Thyroid gland (tissue), 4 donors: ENCODE measurements at regions of chr1 and their contacts with region 1.

Region 1: DNA sequence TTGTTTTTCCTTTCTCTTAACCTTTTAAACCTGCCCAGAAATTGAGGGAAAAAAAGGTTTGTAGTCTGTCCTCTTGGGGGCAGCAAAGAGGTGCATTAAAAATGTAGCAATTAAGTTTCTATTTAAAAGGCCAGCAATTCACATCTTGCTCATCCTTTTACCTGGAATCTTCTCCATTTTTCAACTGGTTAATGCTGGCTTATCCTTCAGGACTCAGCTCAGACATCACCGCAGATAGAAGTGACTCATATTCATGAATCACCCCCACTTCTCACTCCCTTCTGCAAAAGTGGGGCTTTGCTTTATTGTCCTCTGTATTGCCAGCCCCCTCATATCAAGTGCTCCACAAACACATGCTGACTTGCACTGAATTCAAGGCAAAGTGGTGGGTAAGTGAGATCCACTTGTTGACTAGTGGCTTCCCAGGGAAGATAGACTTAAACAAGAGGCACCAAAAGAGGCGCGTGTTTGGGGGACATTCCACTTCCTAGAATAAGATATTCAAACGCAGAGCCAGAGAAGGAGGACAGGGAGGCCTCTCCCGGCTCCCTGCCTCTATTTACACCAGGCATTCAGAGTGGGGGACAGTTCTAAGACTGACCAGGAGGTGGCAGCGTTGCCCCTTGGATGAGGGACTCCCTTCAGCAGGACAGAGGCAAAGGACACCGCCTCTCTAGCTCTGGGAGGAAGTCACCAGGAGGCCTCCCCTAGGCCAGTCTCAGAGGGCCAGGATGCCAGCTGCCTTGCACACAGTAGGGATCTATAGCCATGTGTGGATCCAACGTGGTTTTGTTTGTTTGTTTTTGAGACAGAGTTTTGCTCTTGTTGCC is 23.2 kb upstream of the ZNF648 start:
- DNase-seq: peak; percentile 89
- H3K4me3 ChIP-seq: no peak overlapping the region
- H3K27ac ChIP-seq: peak overlapping the region; percentile 18 to 76 (median 68)
- H3K4me1 ChIP-seq: peaks cover 10 to 17% of the 10 kb centered on the region in 2 donors
- H3K27me3 ChIP-seq: no peaks in the 10 kb centered on the region
- CTCF ChIP-seq: peak; percentile 74 to 97 (median 92)
- POLR2A ChIP-seq: no peak

Region 2: GRCh38 chr1:181969902-181970301 is 114.8 kb before region 1 on chr1:
- intact Hi-C with region 1: no loop called
- DNase-seq: no peak
- H3K4me3 ChIP-seq: no peak overlapping the region
- H3K27ac ChIP-seq: no peak overlapping the region
- H3K4me1 ChIP-seq: no peaks in the 10 kb centered on the region
- H3K27me3 ChIP-seq: no peaks in the 10 kb centered on the region
- CTCF ChIP-seq: no peak
- POLR2A ChIP-seq: no peak

Region 3: DNA sequence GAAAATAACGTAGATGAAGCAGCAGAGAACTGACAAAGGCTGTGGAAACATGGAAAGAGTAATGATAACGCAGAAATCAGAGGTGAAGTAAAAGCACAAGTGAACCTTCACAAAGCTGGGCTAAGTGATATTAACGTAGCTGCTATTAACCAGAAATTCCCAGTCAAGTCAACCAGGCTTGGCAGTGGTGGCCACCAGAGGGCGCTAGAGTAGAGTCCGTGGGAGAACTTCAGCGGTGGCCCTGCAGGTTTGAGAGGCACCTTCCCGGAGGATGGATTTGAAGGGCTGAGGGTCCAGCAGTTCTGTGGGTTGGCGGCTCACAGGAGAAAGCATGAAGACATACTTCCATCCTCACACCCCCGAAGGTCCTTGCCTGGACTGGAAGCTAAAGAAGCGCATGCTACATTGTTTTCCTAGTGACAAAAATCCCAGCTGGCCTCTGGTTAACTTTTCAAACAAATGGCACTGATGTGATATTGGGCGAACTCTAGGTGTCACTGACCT is 58.5 kb after region 1 on chr1:
- intact Hi-C with region 1: loop called (anchors 5 kb)
- DNase-seq: peak; percentile 93 to 98
- H3K4me3 ChIP-seq: no peak overlapping the region
- H3K27ac ChIP-seq: peak overlapping the region; percentile 94 to 100 (median 95)
- H3K4me1 ChIP-seq: peaks cover 26 to 54% of the 10 kb centered on the region in 2 donors
- H3K27me3 ChIP-seq: no peaks in the 10 kb centered on the region
- CTCF ChIP-seq: peak; percentile 90 to 98 (median 95)
- POLR2A ChIP-seq: no peak

Region 4: DNA sequence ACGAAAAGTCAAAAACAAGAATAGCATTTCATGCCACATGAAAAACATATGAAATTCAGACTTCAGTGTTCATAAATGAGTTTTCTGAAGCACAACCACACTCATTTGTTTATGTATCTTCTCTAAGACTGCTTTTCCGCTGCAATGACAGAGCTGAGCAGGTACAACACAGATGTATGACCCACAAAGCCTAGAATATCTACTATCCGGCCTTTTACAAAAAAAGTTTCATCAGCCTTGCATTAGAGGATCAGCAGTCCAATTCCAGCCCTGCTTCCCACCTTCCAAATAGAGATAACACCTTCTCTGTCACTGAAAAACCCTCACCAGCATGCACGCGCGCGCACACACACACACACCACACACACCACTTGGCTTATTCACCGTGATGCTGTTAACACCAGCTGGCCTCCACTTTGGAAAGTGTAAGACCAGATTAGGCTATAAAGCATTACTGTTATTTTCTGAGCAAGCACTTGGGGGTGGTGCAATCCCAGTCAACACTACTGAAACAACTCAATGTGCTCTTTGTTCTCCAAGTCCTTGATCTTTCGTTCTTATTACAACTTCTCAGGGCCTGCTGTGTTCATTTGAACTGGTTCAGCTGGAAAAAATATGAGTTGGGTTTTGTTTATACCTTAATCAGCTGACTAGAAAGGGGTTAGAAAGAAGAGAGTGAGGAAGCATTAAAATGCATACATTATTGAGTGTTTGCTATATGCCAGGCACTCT is 216.9 kb after region 1 on chr1:
- intact Hi-C with region 1: loop called (anchors 10 kb)
- DNase-seq: peak; percentile 51 to 53
- H3K4me3 ChIP-seq: no peak overlapping the region
- H3K27ac ChIP-seq: peak overlapping the region; percentile 58 to 82 (median 58)
- H3K4me1 ChIP-seq: peaks cover 8 to 37% of the 10 kb centered on the region in 2 donors
- H3K27me3 ChIP-seq: no peaks in the 10 kb centered on the region
- CTCF ChIP-seq: peak in 3 of 6 experiments; percentile 11 to 48 (median 32)
- POLR2A ChIP-seq: no peak

Region 5: GRCh38 chr1:182397771-182398393 is 313.2 kb after region 1 on chr1:
- intact Hi-C with region 1: loop called (anchors 2 kb)
- DNase-seq: peak; percentile 31 to 43
- H3K4me3 ChIP-seq: no peak overlapping the region
- H3K27ac ChIP-seq: peak overlapping the region; percentile 74 to 85 (median 76)
- H3K4me1 ChIP-seq: peaks cover 18 to 21% of the 10 kb centered on the region in 2 donors
- H3K27me3 ChIP-seq: no peaks in the 10 kb centered on the region
- CTCF ChIP-seq: no peak
- POLR2A ChIP-seq: peak in 1 of 2 donors; percentile 19

Region 6: GRCh38 chr1:182595641-182596240 is 511.0 kb after region 1 on chr1:
- intact Hi-C with region 1: loop called (anchors 10 kb)
- DNase-seq: peak; percentile 77 to 83
- H3K4me3 ChIP-seq: no peak overlapping the region
- H3K27ac ChIP-seq: peak overlapping the region in 2 of 3 donors; percentile 40 to 52
- H3K4me1 ChIP-seq: peaks cover 14 to 22% of the 10 kb centered on the region in 2 donors
- H3K27me3 ChIP-seq: no peaks in the 10 kb centered on the region
- CTCF ChIP-seq: peak; percentile 73 to 91 (median 88)
- POLR2A ChIP-seq: no peak

Region 7: DNA sequence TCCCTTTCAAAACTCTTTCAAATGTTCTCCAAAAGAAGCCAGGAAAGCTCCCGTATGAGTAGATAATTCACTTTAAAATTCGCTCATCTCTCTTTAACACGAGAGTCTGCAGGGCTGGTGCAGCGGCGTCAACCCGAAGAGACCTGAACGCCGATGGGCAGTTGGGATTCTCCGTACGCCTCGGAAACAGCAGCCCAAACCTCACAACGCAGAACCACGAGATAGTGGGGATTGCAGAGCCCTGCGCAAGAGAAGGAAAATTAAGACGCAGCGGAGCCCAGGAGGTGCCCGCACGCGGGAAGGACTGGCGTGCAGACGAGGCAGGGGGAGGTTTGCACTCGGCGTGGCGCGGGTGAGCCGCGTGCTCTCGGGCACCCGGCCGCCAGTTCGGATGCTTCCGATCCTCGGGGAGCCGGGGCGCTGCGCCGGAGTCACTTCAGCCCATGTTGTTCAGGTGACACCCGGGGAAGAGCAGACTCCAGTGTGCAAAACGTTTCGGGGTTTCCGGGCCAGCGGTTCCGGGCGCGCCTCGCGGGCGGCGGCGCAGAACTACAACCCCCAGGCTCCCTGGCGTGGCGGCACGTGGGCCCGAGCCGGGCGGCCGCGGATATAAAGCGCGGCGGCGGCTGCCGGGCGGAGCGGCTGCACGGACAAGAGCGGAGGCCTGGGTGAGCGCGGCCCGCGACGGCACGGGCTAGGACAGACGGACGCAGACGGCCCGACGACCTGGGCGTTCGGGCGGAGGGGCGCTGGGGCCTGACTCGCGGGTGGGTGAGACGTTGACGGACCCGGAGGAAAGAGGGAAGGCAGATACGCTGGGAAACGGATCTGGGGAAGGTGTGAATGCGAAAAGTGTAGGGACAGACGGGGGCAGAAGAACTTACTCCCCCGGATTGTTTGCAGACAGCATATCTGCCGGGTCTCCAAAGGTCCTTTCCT is 704.7 kb after region 1 on chr1 and contains the start of gene NPL:
- intact Hi-C with region 1: loop called (anchors 10 kb)
- DNase-seq: peak; percentile 78 to 79
- H3K4me3 ChIP-seq: peak within 1 kb of the TSS; percentile 49 to 87 (median 54)
- H3K27ac ChIP-seq: peak within 1 kb of the TSS in 2 of 3 donors; percentile 53 to 69
- H3K4me1 ChIP-seq: peaks cover 5 to 10% of the 10 kb centered on the region in 2 donors
- H3K27me3 ChIP-seq: no peaks in the 10 kb centered on the region
- CTCF ChIP-seq: peak in 1 of 6 experiments; percentile 22
- POLR2A ChIP-seq: peak in 1 of 2 donors; percentile 98
- total RNA-seq, gene NPL: 4.2 to 13.2 (median 8.0) TPM